Right ventricle myocardium inferior (tissue), 1 donor: ENCODE measurements at regions of chr5 and their contacts with region 1.

Region 1: DNA sequence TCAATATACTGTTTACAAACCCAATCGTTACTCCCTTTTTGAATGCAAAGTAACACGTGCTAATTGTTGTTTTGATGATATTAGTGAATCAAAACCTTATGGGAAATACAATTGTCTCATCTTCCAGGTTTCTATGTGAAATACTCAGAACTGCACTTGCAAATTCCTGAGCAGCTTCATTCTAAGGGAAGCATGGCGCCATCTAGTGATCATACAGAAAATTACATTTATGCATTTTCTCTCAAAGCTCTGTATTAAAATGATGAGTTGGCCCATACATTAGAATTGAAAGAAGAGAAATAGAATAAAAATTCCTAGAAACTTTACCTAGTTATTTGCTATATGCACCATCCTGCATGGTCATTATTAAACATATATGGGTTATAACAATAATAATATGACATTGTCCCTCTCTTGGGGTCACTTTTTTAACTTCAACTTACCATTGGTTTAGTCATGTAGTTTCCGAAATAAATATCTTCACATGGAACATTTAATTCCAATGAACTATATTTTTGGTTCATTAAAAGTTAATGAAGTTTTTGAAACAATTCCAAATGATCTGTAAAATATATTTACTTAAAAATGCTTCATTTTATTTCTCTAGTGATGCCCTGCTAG is 220.0 kb downstream of the PDE4D start:
- DNase-seq: no peak
- ATAC-seq: no peak

Region 2: DNA sequence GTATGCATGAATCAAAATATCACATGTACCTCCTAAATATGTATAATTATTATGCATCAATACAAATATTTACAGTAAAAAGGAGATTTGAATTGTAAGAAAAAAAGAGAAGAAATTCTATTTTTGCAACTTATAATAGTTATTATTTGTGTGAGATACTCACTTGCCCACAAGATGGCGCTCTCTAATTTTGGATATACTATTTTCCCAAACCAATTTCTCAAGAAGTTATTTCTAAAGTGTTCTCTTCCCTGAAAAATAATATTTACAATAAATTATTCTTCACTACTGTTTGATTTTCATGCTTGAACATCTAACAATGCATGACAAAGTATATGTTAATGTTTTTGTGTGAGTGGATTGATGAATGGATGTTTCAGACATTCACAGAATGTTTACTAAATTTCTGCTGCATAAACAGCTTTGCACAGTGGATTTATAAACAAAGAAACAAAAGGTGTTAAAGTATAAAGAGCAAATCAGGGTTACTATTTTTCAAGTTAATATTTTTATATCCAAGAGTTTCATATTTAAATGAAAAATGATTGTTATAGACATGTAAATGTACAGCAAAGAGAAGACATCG is 283.4 kb before region 1 on chr5:
- intact Hi-C with region 1: loop called (anchors 2 kb)
- DNase-seq: no peak
- ATAC-seq: no peak

Region 3: GRCh38 chr5:59506285-59506877 is 167.2 kb before region 1 on chr5:
- intact Hi-C with region 1: loop called (anchors 1 kb)
- DNase-seq: no peak
- ATAC-seq: no peak

Region 4: GRCh38 chr5:59575648-59576445 is 97.7 kb before region 1 on chr5:
- intact Hi-C with region 1: no loop called
- DNase-seq: no peak
- ATAC-seq: no peak